Activated CD8-positive, alpha-beta T cell treated with anti-CD3 and anti-CD28 coated beads for 36 hours (primary cell): ENCODE measurements at regions of chr10 and their contacts with region 1.

Region 1: GRCh38 chr10:6088721-6089390 is at the start of gene RBM17:
- DNase-seq: peak; percentile 98
- ATAC-seq: peak; percentile 79
- H3K4me3 Mint-ChIP-seq: peak within 1 kb of the TSS; percentile 84
- H3K27ac Mint-ChIP-seq: peak within 1 kb of the TSS; percentile 81
- H3K4me1 Mint-ChIP-seq: peaks cover 60% of the 10 kb centered on the region
- H3K27me3 Mint-ChIP-seq: no peaks in the 10 kb centered on the region
- CTCF ChIP-seq: peak; percentile 100
- total RNA-seq, gene RBM17: 284 to 285 TPM

Region 2: GRCh38 chr10:5813287-5814109 is 275.4 kb before region 1 on chr10 and contains the start of gene GDI2:
- CTCF ChIA-PET with region 1: interaction called, 3 read pairs
- POLR2A ChIA-PET with region 1: interaction called, 4 read pairs
- intact Hi-C with region 1: loop called (anchors 10 kb)
- DNase-seq: peak; percentile 98
- ATAC-seq: peak; percentile 94
- H3K4me3 Mint-ChIP-seq: peak within 1 kb of the TSS; percentile 95
- H3K27ac Mint-ChIP-seq: peak within 1 kb of the TSS; percentile 93
- H3K4me1 Mint-ChIP-seq: peaks cover 58% of the 10 kb centered on the region
- H3K27me3 Mint-ChIP-seq: no peaks in the 10 kb centered on the region
- CTCF ChIP-seq: no peak
- total RNA-seq, gene GDI2: 288 to 291 TPM

Region 3: DNA sequence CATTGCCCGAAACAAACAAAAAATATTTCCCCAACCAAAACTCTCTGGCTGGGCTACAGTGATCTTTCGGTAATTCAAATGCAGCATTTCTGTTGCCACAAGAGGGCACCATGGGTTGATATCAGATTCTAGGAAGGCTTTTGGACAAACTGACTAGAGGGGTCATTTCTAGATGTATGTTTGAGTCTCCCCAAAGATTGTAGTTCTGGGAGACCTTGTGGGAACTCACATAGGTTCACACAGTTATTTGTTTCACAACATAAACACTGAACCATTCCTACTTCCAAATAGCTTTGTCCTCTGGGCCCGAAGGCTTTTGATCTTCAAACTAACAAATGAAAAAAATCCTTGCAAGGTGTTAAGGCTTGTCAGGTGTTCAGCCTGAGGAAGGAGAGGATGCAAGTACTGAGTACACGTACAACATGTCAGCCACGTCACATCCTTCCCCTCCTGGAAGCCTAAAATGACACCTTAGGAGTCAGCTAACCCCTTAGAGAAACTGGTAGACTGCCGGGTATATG is 74.6 kb before region 1 on chr10:
- CTCF ChIA-PET with region 1: interaction called, 16 read pairs
- POLR2A ChIA-PET with region 1: no interaction called
- intact Hi-C with region 1: no loop called
- DNase-seq: peak; percentile 83
- ATAC-seq: peak; percentile 76
- H3K4me3 Mint-ChIP-seq: no peak overlapping the region
- H3K27ac Mint-ChIP-seq: peak overlapping the region; percentile 89
- H3K4me1 Mint-ChIP-seq: peaks cover 69% of the 10 kb centered on the region
- H3K27me3 Mint-ChIP-seq: no peaks in the 10 kb centered on the region
- CTCF ChIP-seq: peak; percentile 70

Region 4: DNA sequence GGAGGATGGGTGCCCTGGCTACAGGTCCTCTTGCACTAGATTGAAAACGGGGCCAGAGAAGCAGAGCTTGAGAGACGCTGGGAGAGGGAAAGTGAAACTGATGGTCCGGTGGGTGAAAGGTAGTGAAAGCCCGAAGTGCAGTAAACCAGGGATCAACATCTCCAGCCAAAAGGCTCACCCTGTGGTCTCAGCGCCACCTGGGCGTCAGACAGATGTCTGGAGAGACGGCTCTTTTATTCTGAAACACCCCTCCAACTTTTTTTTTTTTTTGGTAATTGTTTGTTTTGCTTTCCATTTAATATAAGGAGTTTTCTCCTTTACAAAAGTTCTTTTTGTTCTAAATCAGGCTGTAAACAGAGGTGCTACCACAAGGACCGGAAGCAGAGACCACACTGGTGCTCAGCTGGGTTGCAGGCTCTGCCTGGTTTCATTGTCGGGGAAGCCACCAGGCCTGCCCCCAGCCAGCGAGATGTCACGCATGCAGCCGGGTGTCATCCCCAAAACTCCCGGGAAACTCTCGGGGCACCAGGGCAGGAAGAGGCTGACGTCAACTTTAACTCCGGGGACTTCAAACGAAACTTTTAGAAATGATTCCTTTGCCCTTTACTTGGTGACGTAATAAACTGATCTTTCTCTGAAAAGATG is 37.9 kb before region 1 on chr10:
- CTCF ChIA-PET with region 1: interaction called, 118 read pairs
- POLR2A ChIA-PET with region 1: interaction called, 846 read pairs
- intact Hi-C with region 1: loop called (anchors 5 kb)
- DNase-seq: peak; percentile 98
- ATAC-seq: peak; percentile 41
- H3K4me3 Mint-ChIP-seq: peak overlapping the region; percentile 76
- H3K27ac Mint-ChIP-seq: peak overlapping the region; percentile 91
- H3K4me1 Mint-ChIP-seq: peaks cover 84% of the 10 kb centered on the region
- H3K27me3 Mint-ChIP-seq: no peaks in the 10 kb centered on the region
- CTCF ChIP-seq: no peak

Region 5: GRCh38 chr10:6068422-6068821 is 20.4 kb before region 1 on chr10:
- CTCF ChIA-PET with region 1: interaction called, 59 read pairs
- POLR2A ChIA-PET with region 1: interaction called, 188 read pairs
- intact Hi-C with region 1: loop called (anchors 2 kb)
- DNase-seq: peak; percentile 75
- ATAC-seq: peak; percentile 22
- H3K4me3 Mint-ChIP-seq: peak overlapping the region; percentile 77
- H3K27ac Mint-ChIP-seq: peak overlapping the region; percentile 97
- H3K4me1 Mint-ChIP-seq: peaks cover 94% of the 10 kb centered on the region
- H3K27me3 Mint-ChIP-seq: no peaks in the 10 kb centered on the region
- CTCF ChIP-seq: no peak

Region 6: DNA sequence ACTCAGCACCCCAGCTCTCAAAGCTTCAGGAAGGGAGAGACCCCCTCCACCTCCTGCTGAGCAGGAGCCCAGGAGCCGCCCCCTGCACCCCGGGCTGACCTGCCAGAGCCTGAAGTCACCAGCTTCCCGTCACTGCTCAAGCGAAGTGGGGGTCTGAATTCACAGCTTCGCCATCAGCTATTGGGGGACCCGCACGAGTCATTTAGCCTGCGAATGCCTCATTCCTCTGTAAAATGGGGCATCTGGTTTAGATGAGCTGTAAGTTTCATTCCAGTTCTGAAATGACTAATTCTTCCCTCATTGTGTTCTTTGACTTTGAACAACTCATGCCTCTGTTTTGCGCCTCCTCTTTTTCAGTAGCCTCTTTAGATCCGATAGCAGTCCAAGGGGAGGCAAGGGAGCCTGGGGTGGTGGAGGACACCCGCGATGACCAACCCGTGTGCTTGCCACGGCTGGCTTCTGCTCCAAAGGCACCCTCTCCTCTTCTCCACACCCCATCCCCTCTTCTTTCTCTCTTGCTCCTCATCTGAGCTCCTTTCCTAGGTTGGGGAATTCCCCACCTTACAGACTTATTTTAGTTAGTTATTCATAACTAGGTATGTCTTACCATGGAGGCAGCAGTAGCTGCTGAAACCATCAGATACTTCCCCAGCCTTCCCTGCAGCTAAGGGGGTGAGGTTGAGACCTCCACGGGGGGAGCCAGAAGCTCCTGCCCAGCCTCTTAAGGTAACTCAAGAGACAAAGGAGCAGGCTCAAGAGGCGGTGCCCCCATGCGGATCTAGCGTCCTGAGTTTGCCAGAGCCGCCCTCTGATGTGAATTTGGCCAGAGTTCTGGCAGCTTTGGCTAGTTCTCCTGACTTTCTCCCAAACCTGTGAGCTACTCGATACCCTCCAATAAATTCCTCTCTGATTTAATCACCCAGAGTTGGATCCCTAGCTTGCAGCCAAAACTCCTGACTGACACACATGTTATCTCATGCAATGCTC is 47.7 kb after region 1 on chr10:
- CTCF ChIA-PET with region 1: interaction called, 10 read pairs
- POLR2A ChIA-PET with region 1: interaction called, 4 read pairs
- intact Hi-C with region 1: no loop called
- DNase-seq: peak; percentile 84
- ATAC-seq: peak; percentile 80
- H3K4me3 Mint-ChIP-seq: peak overlapping the region; percentile 58
- H3K27ac Mint-ChIP-seq: peak overlapping the region; percentile 89
- H3K4me1 Mint-ChIP-seq: peaks cover 53% of the 10 kb centered on the region
- H3K27me3 Mint-ChIP-seq: peaks cover 9% of the 10 kb centered on the region
- CTCF ChIP-seq: no peak

Region 7: GRCh38 chr10:6863381-6863780 is 774.5 kb after region 1 on chr10:
- CTCF ChIA-PET with region 1: no interaction called
- POLR2A ChIA-PET with region 1: no interaction called
- intact Hi-C with region 1: no loop called
- DNase-seq: no peak
- ATAC-seq: peak; percentile 20
- H3K4me3 Mint-ChIP-seq: no peak overlapping the region
- H3K27ac Mint-ChIP-seq: no peak overlapping the region
- H3K4me1 Mint-ChIP-seq: peaks cover 4% of the 10 kb centered on the region
- H3K27me3 Mint-ChIP-seq: peaks cover 11% of the 10 kb centered on the region
- CTCF ChIP-seq: no peak